ENCODE measurements at regions of chrX and their contacts with region 1.

Region 1: DNA sequence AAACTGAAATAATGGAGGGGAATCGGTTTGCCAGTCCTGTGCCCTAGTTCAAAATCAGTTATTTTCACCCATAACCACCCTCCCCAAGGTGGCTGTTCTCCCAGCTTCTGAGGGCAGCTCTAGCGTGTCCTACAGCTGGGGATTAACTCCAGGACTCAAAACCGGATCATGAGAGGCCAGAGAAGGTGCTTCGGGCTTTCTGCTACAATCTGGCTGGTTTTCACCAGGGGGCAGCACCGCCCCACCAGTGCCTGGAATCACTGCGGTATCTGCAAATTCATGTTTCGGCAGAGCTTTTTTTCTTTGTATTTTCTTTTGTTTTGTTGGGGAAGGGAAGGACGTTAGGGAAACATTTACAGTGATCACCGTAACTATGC is 28.4 kb downstream of the PDHA1 start:
- DNase-seq: peak; percentile 81
- H3K4me3 Mint-ChIP-seq: peak overlapping the region; percentile 66
- H3K27ac Mint-ChIP-seq: no peak overlapping the region
- H3K4me1 Mint-ChIP-seq: peaks cover 5% of the 10 kb centered on the region
- H3K27me3 Mint-ChIP-seq: no peaks in the 10 kb centered on the region

Region 2: DNA sequence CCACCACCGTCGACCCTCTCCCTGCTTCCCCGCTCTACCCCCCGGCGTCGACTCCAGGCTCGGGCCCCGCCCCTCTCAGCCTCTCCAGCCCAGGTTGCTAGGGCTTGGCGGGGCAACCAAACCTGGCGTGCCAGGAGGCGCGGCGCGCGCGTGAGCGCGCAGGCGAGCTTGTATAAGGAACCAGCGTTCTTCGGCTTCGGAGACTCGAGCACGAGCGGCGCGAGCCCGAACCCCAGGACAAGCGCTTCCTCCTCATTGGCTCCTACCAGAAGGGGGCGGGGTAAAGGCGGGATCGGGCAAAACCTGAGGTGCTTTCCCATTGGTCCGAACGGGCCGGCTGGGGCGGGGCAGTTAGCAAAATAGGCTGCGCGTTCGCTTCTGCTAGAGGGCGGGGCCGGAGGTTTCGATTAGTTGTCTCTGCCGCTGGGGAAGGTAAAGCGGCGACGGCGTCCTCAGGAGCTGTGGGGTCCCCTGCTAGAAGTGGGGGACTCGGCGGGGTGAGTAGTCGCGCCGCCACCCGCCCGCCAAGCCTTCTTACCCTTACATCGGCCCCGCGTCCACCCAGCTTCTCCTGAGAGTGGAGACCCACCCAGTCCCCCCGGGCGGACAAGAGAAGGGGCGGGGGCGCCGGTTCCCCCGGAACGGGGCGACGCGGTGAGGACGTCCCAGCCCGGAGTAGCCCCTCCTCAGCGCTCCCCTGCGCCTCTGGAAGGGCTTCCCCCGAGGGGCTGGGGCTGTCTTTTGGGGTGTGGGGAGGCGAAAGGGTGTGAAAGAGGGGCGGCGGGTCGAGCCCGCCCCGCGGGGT is 946.8 kb before region 1 on chrX and contains the start of gene CDKL5:
- CTCF ChIA-PET with region 1: no interaction called
- intact Hi-C with region 1: no loop called
- DNase-seq: peak; percentile 97
- H3K4me3 Mint-ChIP-seq: peak within 1 kb of the TSS; percentile 77
- H3K27ac Mint-ChIP-seq: no peak within 1 kb of the TSS
- H3K4me1 Mint-ChIP-seq: peaks cover 7% of the 10 kb centered on the region
- H3K27me3 Mint-ChIP-seq: no peaks in the 10 kb centered on the region
- total RNA-seq, gene CDKL5: 0.91 to 1.4 TPM

Region 3: DNA sequence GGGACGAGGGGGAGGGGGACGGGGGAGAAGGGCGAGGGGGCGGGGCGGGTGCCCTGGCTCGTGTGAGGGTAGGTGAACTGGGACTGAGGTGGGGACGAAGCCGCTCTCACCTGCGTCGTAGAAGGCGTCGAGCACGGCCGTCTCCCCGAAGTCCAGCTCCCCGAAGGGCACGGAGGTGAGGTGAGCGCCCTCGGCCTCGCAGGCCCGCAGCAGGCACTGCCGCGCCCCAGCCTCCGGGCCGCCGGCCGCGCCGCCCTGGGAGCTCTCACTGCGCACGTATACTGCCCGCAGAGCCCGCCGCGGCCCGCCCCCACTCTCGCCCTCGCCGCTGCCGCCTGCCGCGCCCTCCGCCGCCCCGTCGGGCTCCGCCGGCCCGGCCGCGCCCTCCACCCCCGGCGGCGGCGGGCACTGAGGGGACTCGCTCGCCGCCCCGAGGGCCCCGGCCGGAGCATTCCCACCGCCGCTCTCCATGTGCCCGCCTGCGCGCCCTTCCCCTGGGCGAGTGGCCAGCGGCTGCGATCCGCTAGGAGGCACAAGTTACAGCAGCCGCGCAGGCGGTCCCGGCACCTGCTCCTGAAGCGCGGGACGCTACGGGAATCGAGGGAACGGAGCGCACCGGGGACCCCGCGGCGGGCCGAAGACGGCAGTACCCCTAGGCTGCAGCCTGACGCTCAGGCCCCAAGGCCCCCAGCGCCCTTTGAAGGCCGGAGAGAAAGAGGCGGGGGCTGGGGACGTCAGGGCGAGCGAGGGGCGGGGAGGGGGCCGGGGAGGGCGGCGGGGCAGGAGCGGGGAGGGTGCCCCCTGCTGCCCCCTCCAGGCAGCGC is 142.8 kb after region 1 on chrX and contains the start of gene MAP3K15:
- CTCF ChIA-PET with region 1: no interaction called
- intact Hi-C with region 1: loop called (anchors 2 kb)
- DNase-seq: peak; percentile 15
- H3K4me3 Mint-ChIP-seq: peak within 1 kb of the TSS; percentile 50
- H3K27ac Mint-ChIP-seq: no peak within 1 kb of the TSS
- H3K4me1 Mint-ChIP-seq: no peaks in the 10 kb centered on the region
- H3K27me3 Mint-ChIP-seq: peaks cover 10% of the 10 kb centered on the region
- total RNA-seq, gene MAP3K15: 1.2 to 1.3 TPM

Region 4: DNA sequence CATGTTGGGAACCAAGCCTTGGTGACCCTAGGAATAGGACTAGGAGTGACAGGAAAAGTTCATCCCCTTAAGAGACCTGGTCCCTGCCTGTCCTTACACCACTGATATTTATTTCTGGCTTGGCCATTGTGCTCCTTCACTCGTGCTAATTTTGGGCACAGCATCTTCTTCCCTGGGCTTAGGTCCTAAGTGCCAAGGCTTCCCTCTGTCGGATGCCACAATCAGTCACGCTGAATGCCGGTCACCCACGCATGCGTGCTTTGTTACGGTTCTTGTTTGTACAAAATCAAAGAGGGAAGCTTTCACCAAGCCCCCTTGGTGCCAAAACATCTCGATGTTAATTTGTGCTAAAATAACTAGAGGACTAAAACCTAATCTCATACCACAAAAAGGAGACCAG is 160.6 kb after region 1 on chrX:
- CTCF ChIA-PET with region 1: interaction called, 3 read pairs
- intact Hi-C with region 1: loop called (anchors 1 kb)
- DNase-seq: no peak
- H3K4me3 Mint-ChIP-seq: no peak overlapping the region
- H3K27ac Mint-ChIP-seq: no peak overlapping the region
- H3K4me1 Mint-ChIP-seq: no peaks in the 10 kb centered on the region
- H3K27me3 Mint-ChIP-seq: no peaks in the 10 kb centered on the region

Region 5: DNA sequence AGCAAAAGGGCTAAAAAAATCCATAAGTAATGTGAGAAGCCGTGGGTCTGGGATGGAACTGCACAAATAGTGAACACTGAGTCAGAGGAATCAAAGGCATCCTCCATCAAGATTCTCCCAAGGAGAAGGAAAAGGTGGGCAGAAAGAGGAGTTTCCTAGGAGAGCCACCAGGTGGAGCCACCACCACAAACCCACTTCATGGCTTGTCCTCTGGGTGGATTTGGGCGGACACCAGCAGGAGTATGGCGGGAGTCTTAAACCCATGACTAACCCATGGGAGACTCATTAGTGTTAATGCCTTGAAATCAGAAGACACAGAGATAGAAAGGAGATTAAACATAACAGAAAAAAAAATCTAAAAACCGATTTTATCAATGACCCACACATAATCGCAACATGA is 367.5 kb after region 1 on chrX:
- CTCF ChIA-PET with region 1: interaction called, 3 read pairs
- intact Hi-C with region 1: loop called (anchors 10 kb)
- DNase-seq: peak; percentile 58
- H3K4me3 Mint-ChIP-seq: no peak overlapping the region
- H3K27ac Mint-ChIP-seq: peak overlapping the region; percentile 51
- H3K4me1 Mint-ChIP-seq: peaks cover 75% of the 10 kb centered on the region
- H3K27me3 Mint-ChIP-seq: no peaks in the 10 kb centered on the region

Region 6: DNA sequence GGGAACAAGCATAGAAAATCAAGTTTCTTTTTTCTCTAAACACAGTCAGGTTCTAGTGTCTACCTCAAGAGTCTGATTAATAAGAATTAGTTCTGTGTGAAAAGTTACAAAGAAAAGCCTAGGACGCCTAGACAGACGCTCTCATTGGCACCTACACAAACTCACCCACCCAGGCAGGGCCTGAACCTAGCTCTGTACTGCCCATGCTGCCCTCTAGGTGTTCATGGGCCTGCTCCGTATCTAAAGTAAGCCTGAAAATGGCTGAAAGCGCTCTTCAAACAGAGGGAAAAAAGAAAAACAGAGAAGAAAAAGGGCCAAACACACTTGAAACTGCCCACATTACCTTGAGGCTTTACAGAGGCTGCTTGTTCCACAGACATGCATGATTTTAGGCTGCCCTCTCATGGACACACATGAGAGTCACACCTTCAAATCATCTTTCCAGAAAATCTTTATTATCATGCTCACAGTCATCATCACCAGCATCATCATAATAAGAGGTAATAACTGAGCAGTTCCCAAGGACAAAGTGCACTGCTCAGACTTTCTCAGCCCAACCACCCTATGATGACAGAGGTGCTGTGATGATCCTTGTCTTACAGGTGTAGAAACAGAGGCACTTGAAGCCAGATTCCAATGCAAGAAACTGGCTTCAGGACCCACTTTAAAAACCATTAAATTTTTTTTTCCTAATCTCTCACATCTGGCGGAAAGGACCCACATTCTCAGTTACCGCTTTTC is 695.0 kb after region 1 on chrX:
- CTCF ChIA-PET with region 1: interaction called, 4 read pairs
- intact Hi-C with region 1: loop called (anchors 2 kb)
- DNase-seq: peak; percentile 44
- H3K4me3 Mint-ChIP-seq: no peak overlapping the region
- H3K27ac Mint-ChIP-seq: no peak overlapping the region
- H3K4me1 Mint-ChIP-seq: no peaks in the 10 kb centered on the region
- H3K27me3 Mint-ChIP-seq: no peaks in the 10 kb centered on the region